ENCODE measurements at regions of chr9 and their contacts with region 1.

Region 1: GRCh38 chr9:1460143-1460769 is 410.1 kb downstream of the DMRT2 start:
- DNase-seq: peak; percentile 22
- ATAC-seq: no peak
- H3K4me3 Mint-ChIP-seq: no peak overlapping the region
- H3K27ac Mint-ChIP-seq: no peak overlapping the region
- H3K4me1 Mint-ChIP-seq: no peaks in the 10 kb centered on the region
- H3K27me3 Mint-ChIP-seq: peaks cover 4% of the 10 kb centered on the region
- CTCF ChIP-seq: peak; percentile 49

Region 2: GRCh38 chr9:1604942-1605560 is 144.8 kb after region 1 on chr9:
- CTCF ChIA-PET with region 1: interaction called, 3 read pairs
- POLR2A ChIA-PET with region 1: no interaction called
- intact Hi-C with region 1: loop called (anchors 10 kb)
- DNase-seq: peak; percentile 1
- ATAC-seq: no peak
- H3K4me3 Mint-ChIP-seq: no peak overlapping the region
- H3K27ac Mint-ChIP-seq: no peak overlapping the region
- H3K4me1 Mint-ChIP-seq: no peaks in the 10 kb centered on the region
- H3K27me3 Mint-ChIP-seq: peaks cover 3% of the 10 kb centered on the region
- CTCF ChIP-seq: peak; percentile 54

Measured in activated CD8-positive, alpha-beta T cell treated with anti-CD3 and anti-CD28 coated beads for 36 hours (primary cell).